Mammary epithelial cell (primary cell): ENCODE measurements at regions of chr6 and their contacts with region 1.

Region 1: GRCh38 chr6:41505122-41506049 is 40.8 kb upstream of the FOXP4 start:
- DNase-seq: peak; percentile 27
- H3K4me3 ChIP-seq: no peak overlapping the region
- H3K27ac ChIP-seq: no peak overlapping the region
- H3K4me1 ChIP-seq: peaks cover 9% of the 10 kb centered on the region
- H3K27me3 ChIP-seq: peaks cover 13% of the 10 kb centered on the region
- CTCF ChIP-seq: no peak

Region 2: GRCh38 chr6:41416501-41416837 is 88.9 kb before region 1 on chr6:
- CTCF ChIA-PET with region 1: no interaction called
- dilution Hi-C with region 1: loop called (anchors 5 kb)
- in situ Hi-C with region 1: no loop called
- intact Hi-C with region 1: no loop called
- DNase-seq: no peak
- H3K4me3 ChIP-seq: no peak overlapping the region
- H3K27ac ChIP-seq: no peak overlapping the region
- H3K4me1 ChIP-seq: no peaks in the 10 kb centered on the region
- H3K27me3 ChIP-seq: peaks cover 7% of the 10 kb centered on the region
- CTCF ChIP-seq: no peak

Region 3: DNA sequence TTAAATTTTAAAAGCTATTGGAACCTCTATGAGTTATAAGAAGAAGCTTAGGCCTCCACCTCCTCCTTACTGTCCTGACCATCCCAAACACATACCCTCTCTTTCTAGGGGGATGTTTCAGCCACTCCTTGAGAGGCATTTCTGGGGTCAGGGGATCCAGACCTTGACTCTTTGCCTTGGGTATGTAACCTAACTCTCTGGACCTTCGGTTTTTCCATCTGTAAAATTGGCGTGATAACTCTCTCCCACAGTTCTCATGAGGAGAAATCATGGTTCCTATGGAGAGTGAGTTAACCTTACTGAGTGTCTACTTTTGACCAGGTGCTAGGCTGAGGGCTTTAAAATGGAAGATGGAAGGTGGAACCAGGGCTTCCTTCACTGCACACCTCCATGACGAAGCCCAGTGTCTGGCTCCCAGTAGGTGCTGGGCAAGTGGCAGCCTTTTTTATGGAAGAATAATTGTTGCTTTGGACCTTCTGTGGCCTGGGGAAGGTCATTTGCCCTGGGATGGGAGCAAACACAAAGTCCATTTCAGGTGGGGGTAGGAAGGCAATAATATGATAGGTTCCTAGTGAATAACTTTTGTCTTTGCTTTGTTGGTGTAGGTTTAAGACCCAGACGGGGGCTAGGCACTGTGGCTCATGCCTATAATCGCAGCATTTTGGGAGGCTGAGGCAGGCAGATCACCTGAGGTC is 59.2 kb after region 1 on chr6:
- CTCF ChIA-PET with region 1: no interaction called
- dilution Hi-C with region 1: no loop called
- in situ Hi-C with region 1: no loop called
- intact Hi-C with region 1: no loop called
- DNase-seq: no peak
- H3K4me3 ChIP-seq: no peak overlapping the region
- H3K27ac ChIP-seq: no peak overlapping the region
- H3K4me1 ChIP-seq: no peaks in the 10 kb centered on the region
- H3K27me3 ChIP-seq: no peaks in the 10 kb centered on the region
- CTCF ChIP-seq: no peak